ENCODE measurements at regions of chr3 and their contacts with region 1.

Region 1: GRCh38 chr3:113745273-113746068 is 578 bp downstream of the NAA50 start:
- DNase-seq: peak; percentile 61 to 94 (median 70)
- ATAC-seq: peak; percentile 71
- H3K4me3 ChIP-seq: peak overlapping the region; percentile 88
- H3K4me3 Mint-ChIP-seq: peak overlapping the region; percentile 94
- H3K27ac ChIP-seq: peak overlapping the region; percentile 100
- H3K27ac Mint-ChIP-seq: peak overlapping the region; percentile 100
- H3K4me1 ChIP-seq: peaks cover 27% of the 10 kb centered on the region
- H3K4me1 Mint-ChIP-seq: peaks cover 85% of the 10 kb centered on the region
- H3K27me3 ChIP-seq: no peaks in the 10 kb centered on the region
- H3K27me3 Mint-ChIP-seq: no peaks in the 10 kb centered on the region
- CTCF ChIP-seq: peak; percentile 70

Region 2: DNA sequence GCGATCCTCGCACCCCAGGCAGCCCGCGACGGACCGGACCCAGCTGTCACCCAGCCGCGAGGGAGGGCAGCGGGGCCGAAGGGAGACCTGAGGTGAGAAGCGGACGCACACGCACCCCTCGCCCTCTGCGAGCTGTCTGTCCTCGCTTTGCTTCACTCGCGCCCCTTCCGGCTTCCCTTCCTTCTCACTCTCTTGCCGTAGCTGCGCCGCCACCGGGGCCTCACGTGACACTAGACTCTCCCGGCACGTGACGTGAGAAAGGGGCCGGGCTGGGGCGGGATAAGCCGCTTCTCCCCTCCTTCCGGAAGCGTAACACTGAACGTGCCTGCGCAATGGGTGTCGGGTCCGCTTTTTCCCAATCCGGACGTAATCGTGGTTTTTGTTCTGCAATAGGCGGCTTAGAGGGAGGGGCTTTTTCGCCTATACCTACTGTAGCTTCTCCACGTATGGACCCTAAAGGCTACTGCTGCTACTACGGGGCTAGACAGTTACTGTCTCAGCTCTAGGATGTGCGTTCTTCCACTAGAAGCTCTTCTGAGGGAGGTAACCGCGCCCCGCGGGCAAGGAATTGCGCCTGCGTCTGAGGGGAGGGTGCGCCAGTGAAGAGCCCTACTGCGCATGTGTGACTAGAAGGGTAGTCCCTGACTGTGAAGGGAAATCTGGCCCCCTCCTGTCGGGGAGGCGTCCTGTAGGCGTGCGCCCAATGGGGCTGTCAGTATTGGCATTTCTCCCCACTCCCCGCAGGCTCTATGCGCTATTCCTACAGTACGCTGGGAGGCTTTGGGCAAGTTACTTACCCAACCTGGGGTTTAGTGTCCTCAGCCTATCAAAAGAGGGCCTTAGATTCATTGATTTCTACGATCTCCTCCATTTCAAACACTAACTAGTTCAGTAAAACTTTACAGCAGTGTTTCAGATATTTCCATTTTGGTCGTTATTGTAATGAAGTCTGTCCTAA is 1183.5 kb before region 1 on chr3 and contains the starts of genes ATG3 and SLC35A5:
- CTCF ChIA-PET with region 1: no interaction called
- POLR2A ChIA-PET with region 1: no interaction called
- intact Hi-C with region 1: loop called in 1 of 2 experiments (anchors 5 kb)
- DNase-seq: peak; percentile 98 to 100 (median 99)
- ATAC-seq: peak; percentile 75
- H3K4me3 ChIP-seq: peak within 1 kb of the TSS; percentile 85
- H3K4me3 Mint-ChIP-seq: peak within 1 kb of the TSS; percentile 100
- H3K27ac ChIP-seq: peak within 1 kb of the TSS; percentile 94 to 98
- H3K27ac Mint-ChIP-seq: peak within 1 kb of the TSS; percentile 100
- H3K4me1 ChIP-seq: peaks cover 17% of the 10 kb centered on the region
- H3K4me1 Mint-ChIP-seq: peaks cover 73% of the 10 kb centered on the region
- H3K27me3 ChIP-seq: no peaks in the 10 kb centered on the region
- H3K27me3 Mint-ChIP-seq: no peaks in the 10 kb centered on the region
- CTCF ChIP-seq: no peak
- total RNA-seq, gene ATG3: 43.3 to 43.8 TPM
- total RNA-seq, gene SLC35A5: 4.6 to 7.3 TPM

Region 3: DNA sequence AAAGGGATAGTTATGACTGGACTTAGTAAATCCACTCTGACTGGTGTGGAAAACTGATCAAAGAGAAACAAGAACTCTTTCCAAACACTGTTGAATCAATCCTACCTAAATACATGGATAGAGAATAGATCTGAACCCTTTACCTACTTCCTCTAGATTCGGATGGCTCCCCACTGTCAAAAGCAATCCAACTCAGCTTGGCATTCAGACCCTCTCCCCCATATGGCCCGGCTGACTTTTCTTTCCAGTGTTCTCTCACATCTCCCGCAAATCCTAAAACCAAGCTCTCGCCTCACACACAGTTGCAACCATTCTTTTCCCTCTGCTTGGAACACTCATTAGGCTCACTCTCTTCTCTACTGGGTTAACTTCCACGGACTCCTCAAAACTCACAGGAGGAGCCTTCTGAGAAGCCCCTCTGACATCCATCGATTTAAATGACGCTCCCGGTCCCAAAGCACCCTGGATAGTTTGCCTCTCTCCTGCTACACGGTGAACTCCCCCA is 231.2 kb before region 1 on chr3:
- CTCF ChIA-PET with region 1: interaction called, 14 read pairs
- POLR2A ChIA-PET with region 1: interaction called, 49 read pairs
- intact Hi-C with region 1: loop called (anchors 5 kb)
- DNase-seq: peak in 1 of 14 experiments; percentile 6
- ATAC-seq: peak; percentile 0
- H3K4me3 ChIP-seq: peak overlapping the region; percentile 82
- H3K4me3 Mint-ChIP-seq: no peak overlapping the region
- H3K27ac ChIP-seq: peak overlapping the region; percentile 87 to 93
- H3K27ac Mint-ChIP-seq: no peak overlapping the region
- H3K4me1 ChIP-seq: peaks cover 18% of the 10 kb centered on the region
- H3K4me1 Mint-ChIP-seq: peaks cover 7% of the 10 kb centered on the region
- H3K27me3 ChIP-seq: no peaks in the 10 kb centered on the region
- H3K27me3 Mint-ChIP-seq: peaks cover 16% of the 10 kb centered on the region
- CTCF ChIP-seq: no peak

Region 4: DNA sequence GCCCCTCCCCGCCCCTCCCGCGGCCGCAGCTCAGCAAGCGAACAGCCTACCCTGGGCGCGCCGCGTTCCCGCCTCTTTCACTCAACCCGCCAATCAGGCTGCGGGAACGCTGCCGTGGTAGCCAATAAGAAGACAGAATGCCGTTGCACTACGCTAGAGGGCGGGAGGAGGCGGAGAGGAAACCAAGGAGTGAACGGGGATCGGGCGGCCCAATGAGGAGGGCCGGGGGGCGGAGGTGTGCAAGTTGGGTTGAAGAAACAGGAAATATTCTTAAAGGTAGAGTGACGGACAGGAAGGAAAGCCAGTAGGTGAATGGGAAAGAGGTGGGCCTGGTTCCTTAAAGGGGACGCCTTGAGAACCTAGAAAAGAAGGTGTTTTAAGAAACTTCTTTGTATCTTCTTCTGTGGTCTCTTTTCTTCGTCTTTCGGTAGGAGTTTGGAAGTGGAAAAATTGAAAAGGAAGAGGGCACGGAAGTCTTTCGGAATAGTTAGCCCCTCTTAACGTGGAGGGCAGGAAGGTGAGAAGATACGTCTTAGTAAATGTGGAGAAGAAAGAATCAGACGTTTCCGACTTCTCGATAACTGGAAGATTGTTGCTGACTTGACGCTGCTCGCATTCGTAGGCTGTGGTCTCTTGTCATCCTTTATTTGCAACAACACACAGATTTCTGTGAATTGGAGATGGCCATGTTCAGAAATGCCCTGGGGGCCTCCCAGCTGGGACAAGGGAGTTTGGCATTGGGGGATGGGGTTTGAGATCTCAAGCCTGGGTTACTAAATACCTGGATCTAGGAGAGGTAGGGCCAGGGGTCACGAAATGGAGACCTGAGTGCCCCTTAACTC is 48.6 kb before region 1 on chr3:
- CTCF ChIA-PET with region 1: interaction called, 12 read pairs
- POLR2A ChIA-PET with region 1: interaction called, 116 read pairs
- intact Hi-C with region 1: loop called (anchors 1 to 2 kb)
- DNase-seq: peak; percentile 96 to 100 (median 98)
- ATAC-seq: peak; percentile 87
- H3K4me3 ChIP-seq: peak overlapping the region; percentile 78
- H3K4me3 Mint-ChIP-seq: no peak overlapping the region
- H3K27ac ChIP-seq: peak overlapping the region; percentile 87
- H3K27ac Mint-ChIP-seq: no peak overlapping the region
- H3K4me1 ChIP-seq: peaks cover 23% of the 10 kb centered on the region
- H3K4me1 Mint-ChIP-seq: peaks cover 23% of the 10 kb centered on the region
- H3K27me3 ChIP-seq: no peaks in the 10 kb centered on the region
- H3K27me3 Mint-ChIP-seq: no peaks in the 10 kb centered on the region
- CTCF ChIP-seq: no peak

Region 5: GRCh38 chr3:113838631-113839209 is 93.2 kb after region 1 on chr3 and contains the start of gene GRAMD1C:
- CTCF ChIA-PET with region 1: interaction called, 11 read pairs
- POLR2A ChIA-PET with region 1: interaction called, 3 read pairs
- intact Hi-C with region 1: no loop called
- DNase-seq: peak; percentile 74 to 94 (median 80)
- ATAC-seq: peak; percentile 99
- H3K4me3 ChIP-seq: peak within 1 kb of the TSS; percentile 56
- H3K4me3 Mint-ChIP-seq: peak within 1 kb of the TSS; percentile 74
- H3K27ac ChIP-seq: no peak within 1 kb of the TSS
- H3K27ac Mint-ChIP-seq: no peak within 1 kb of the TSS
- H3K4me1 ChIP-seq: peaks cover 8% of the 10 kb centered on the region
- H3K4me1 Mint-ChIP-seq: no peaks in the 10 kb centered on the region
- H3K27me3 ChIP-seq: no peaks in the 10 kb centered on the region
- H3K27me3 Mint-ChIP-seq: no peaks in the 10 kb centered on the region
- CTCF ChIP-seq: peak; percentile 83
- total RNA-seq, gene GRAMD1C: 0.22 to 0.55 TPM

Region 6: DNA sequence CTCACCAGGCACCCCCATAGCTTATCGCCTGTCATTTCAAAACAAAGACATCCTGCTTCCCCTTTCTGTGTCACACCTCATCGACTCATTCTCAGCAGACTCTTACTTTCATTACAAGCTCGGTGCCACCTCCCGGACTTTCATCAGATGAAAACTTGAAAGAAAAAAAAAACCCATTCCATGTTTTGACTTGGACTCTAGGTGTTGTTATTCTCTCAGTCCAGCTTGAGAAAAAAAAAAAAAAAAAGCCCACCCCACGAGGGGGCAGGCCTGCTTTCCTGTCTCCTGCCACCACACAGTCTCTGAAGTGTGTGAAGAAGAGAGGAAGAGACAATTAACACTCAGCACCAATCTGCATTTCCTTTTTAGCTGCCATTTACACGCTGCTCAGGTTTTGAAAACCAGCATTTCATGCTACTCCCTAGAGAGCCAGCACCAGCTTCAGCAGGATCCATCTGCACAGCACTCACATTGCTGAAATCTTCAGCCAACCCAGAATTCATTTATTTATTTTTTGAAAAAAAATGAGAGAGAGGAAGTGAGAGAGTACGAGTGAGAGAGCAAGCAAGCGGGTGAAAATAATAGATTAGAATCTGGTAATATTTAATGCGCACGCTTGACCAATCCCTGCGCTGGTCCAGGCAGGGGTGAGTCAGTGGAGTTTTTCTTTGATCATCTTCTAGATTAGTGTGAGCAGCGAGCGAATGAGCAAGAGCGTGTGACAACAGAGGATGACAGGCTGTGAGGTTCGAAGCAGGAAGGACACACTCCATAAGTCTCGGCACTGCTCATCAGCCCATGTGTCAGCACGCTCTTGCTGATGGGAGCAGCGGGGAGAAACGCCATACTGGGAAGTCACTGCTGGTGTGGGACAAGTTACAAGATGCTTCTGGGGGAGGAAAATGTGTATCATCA is 468.4 kb after region 1 on chr3:
- CTCF ChIA-PET with region 1: interaction called, 7 read pairs
- POLR2A ChIA-PET with region 1: interaction called, 22 read pairs
- intact Hi-C with region 1: no loop called
- DNase-seq: peak; percentile 53 to 91 (median 64)
- ATAC-seq: peak; percentile 51
- H3K4me3 ChIP-seq: peak overlapping the region; percentile 59
- H3K4me3 Mint-ChIP-seq: no peak overlapping the region
- H3K27ac ChIP-seq: peak overlapping the region; percentile 93 to 94
- H3K27ac Mint-ChIP-seq: no peak overlapping the region
- H3K4me1 ChIP-seq: peaks cover 70% of the 10 kb centered on the region
- H3K4me1 Mint-ChIP-seq: no peaks in the 10 kb centered on the region
- H3K27me3 ChIP-seq: no peaks in the 10 kb centered on the region
- H3K27me3 Mint-ChIP-seq: no peaks in the 10 kb centered on the region
- CTCF ChIP-seq: peak; percentile 5

Measured in CD4-positive, alpha-beta T cell (primary cell).